ENCODE measurements at regions of chr3 and their contacts with region 1.

Region 1: GRCh38 chr3:124995460-124995994 is 60.3 kb downstream of the HEG1 start:
- DNase-seq: peak; percentile 41
- ATAC-seq: peak; percentile 43 to 85

Region 2: DNA sequence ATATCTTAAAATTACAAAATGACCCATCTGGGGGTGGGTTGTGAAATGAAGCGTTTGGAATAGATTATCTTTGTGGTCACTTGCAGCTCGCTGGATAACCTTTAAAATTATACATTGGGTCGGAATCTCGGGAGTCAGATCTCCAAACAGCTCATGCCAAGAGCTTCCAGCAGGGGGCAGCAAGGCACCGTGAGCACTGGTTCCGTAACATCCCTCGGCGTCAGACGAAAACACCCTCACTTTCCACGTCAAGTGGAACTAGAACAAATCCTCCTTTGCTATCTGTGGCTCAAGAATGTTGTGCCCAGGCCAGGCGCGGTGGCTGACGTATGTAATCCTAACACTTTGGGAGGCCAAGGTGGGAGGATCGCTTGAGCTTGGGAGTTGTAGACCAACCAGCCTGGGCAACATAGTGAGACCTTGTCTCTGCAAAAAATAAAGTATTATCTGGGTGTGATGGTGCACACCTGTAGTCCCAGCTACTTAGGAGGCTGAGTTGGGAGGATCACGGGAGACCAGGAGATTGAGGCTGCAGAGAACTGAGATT is 234.2 kb before region 1 on chr3:
- intact Hi-C with region 1: loop called in 1 of 2 experiments (anchors 10 kb)
- DNase-seq: peak; percentile 93
- ATAC-seq: peak; percentile 90 to 91

Region 3: GRCh38 chr3:124780761-124781475 is 214.6 kb before region 1 on chr3:
- intact Hi-C with region 1: no loop called
- DNase-seq: peak; percentile 87
- ATAC-seq: peak; percentile 89 to 90

Region 4: GRCh38 chr3:125141596-125142419 is 146.3 kb after region 1 on chr3:
- intact Hi-C with region 1: loop called in 1 of 2 experiments (anchors 5 kb)
- DNase-seq: peak; percentile 87
- ATAC-seq: peak; percentile 69 to 81

Region 5: GRCh38 chr3:125165189-125165947 is 169.8 kb after region 1 on chr3:
- intact Hi-C with region 1: loop called (anchors 5 kb)
- DNase-seq: peak; percentile 75
- ATAC-seq: peak; percentile 84 to 88

Region 6: GRCh38 chr3:125437631-125438435 is 442.3 kb after region 1 on chr3:
- intact Hi-C with region 1: loop called in 1 of 2 experiments (anchors 1 kb)
- DNase-seq: peak; percentile 55
- ATAC-seq: peak; percentile 57 to 70

Measured in left cardiac atrium (tissue), 4 donors.